CD8-positive, alpha-beta memory T cell (primary cell): ENCODE measurements at regions of chr4 and their contacts with region 1.

Region 1: GRCh38 chr4:87235020-87235671 is 14.7 kb upstream of the KLHL8 start:
- DNase-seq: no peak
- H3K4me3 ChIP-seq: peak overlapping the region; percentile 51
- H3K4me3 Mint-ChIP-seq: peak overlapping the region; percentile 61 to 88 (median 78)
- H3K27ac ChIP-seq: no peak overlapping the region
- H3K27ac Mint-ChIP-seq: peak overlapping the region in 1 of 8 donors; percentile 49
- H3K4me1 ChIP-seq: peaks cover 5% of the 10 kb centered on the region
- H3K4me1 Mint-ChIP-seq: peaks cover 0 to 2% (median 0%) of the 10 kb centered on the region in 3 donors
- H3K27me3 ChIP-seq: no peaks in the 10 kb centered on the region
- H3K27me3 Mint-ChIP-seq: peaks cover 3 to 10% of the 10 kb centered on the region in 2 donors

Region 2: DNA sequence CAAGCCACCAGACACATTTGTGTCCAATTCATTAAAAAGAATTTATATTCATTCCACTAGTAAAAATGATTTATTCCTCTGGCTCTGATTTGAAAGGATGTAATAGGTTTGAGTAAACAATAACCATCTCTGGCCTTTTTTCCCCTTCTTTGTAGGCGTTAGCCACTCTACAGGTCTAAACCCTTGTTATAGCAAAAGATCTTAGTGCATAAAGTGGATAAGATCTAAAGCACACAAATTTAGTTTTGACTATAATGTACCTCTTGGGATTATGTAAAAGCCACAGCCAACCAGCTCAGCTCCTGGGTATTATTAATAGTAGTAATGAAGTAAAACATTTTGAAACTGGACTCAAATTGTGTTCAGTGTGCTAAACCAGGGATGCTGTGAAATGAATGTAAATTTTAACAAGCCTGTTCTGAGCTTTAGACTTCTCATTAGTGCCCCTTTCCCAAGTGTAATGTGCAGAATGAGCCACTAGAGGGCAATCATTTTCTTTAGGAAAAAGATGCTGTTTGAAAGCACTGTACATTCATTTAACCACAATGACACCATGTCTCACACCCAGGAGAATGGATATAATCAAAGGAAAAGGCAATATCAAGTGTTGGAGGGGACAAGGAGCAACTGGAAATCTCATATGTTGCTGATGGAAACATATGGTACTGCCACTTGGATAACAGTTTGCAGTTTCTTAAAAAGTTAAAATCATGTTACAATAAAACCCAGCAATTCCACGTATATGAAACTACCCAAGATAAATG is 84.5 kb before region 1 on chr4:
- CTCF ChIA-PET with region 1: interaction called, 43 read pairs
- POLR2A ChIA-PET with region 1: no interaction called
- DNase-seq: peak; percentile 14 to 56 (median 42)
- H3K4me3 ChIP-seq: no peak overlapping the region
- H3K4me3 Mint-ChIP-seq: no peak overlapping the region
- H3K27ac ChIP-seq: no peak overlapping the region
- H3K27ac Mint-ChIP-seq: peak overlapping the region in 1 of 8 donors; percentile 1
- H3K4me1 ChIP-seq: no peaks in the 10 kb centered on the region
- H3K4me1 Mint-ChIP-seq: no peaks in the 10 kb centered on the region
- H3K27me3 ChIP-seq: no peaks in the 10 kb centered on the region
- H3K27me3 Mint-ChIP-seq: no peaks in the 10 kb centered on the region

Region 3: DNA sequence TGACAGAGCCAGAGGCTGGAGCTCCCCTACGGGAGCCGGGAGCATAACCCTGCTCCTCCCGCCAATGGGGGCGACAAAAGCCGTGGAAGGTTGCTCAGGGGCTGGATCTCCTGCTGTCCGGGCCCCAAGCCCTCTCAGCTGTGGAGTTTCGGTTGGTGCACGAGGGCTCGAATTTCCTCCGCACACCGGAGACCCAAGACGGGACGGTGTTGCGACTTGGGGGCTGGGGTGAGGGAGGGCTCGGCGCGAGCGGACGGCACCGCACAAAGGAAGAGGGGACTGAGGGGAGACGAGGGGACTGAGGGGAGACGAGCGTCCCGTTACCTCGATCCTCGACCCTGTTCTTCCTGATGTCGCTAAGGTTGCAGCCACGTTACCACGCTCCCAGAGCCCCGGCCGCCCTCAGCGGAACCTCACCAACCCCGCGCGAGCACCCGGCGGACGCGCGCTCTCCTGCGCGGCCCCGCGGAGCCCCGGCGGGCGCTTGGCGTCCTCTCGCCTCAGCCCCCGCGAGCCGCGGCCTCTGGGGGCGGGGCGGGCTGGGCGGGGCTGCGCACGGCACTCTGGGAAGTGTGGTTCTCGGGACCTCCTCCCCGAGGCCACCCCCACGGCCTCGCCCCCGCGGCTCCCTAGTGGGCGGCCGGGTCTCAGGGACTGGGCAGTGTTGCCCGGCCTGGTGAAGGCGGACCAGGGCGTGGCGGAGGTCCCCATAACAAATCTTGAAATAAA is 14.9 kb before region 1 on chr4 and contains the start of gene KLHL8:
- CTCF ChIA-PET with region 1: interaction called, 19 read pairs
- POLR2A ChIA-PET with region 1: interaction called, 3 read pairs
- DNase-seq: peak; percentile 78 to 92 (median 89)
- H3K4me3 ChIP-seq: peak within 1 kb of the TSS; percentile 99
- H3K4me3 Mint-ChIP-seq: peak within 1 kb of the TSS; percentile 93 to 96 (median 94)
- H3K27ac ChIP-seq: peak within 1 kb of the TSS; percentile 90
- H3K27ac Mint-ChIP-seq: peak within 1 kb of the TSS; percentile 89 to 97 (median 94)
- H3K4me1 ChIP-seq: peaks cover 13% of the 10 kb centered on the region
- H3K4me1 Mint-ChIP-seq: peaks cover 14 to 23% (median 14%) of the 10 kb centered on the region in 3 donors
- H3K27me3 ChIP-seq: no peaks in the 10 kb centered on the region
- H3K27me3 Mint-ChIP-seq: peaks cover 0 to 2% of the 10 kb centered on the region in 2 donors
- total RNA-seq, gene KLHL8: 15.6 to 15.8 TPM

Region 4: DNA sequence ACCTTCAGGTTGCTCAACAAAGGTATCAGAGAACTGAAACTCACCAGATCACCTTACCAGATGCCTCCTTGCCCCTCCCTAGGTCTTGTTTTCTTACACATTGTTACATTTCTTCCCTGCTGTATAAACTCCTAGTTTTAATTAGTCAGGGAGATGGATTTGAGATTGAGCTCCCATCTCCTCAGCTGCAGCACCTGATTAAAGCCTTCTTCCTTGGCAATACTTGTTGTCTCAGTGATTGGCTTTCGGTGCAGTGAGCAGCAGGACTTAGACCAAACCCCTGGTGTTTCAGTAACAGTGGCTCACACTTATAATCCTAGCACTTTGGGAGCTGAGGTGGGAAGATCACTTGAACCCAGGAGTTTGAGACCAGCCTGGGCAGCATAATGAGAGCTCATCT is 27.7 kb after region 1 on chr4:
- CTCF ChIA-PET with region 1: no interaction called
- POLR2A ChIA-PET with region 1: no interaction called
- DNase-seq: no peak
- H3K4me3 ChIP-seq: no peak overlapping the region
- H3K4me3 Mint-ChIP-seq: no peak overlapping the region
- H3K27ac ChIP-seq: no peak overlapping the region
- H3K27ac Mint-ChIP-seq: peak overlapping the region in 1 of 8 donors; percentile 61
- H3K4me1 ChIP-seq: no peaks in the 10 kb centered on the region
- H3K4me1 Mint-ChIP-seq: peaks cover 0 to 3% (median 0%) of the 10 kb centered on the region in 3 donors
- H3K27me3 ChIP-seq: no peaks in the 10 kb centered on the region
- H3K27me3 Mint-ChIP-seq: peaks cover 11 to 24% of the 10 kb centered on the region in 2 donors

Region 5: GRCh38 chr4:87299898-87300297 is 64.8 kb after region 1 on chr4:
- CTCF ChIA-PET with region 1: no interaction called
- POLR2A ChIA-PET with region 1: no interaction called
- DNase-seq: no peak
- H3K4me3 ChIP-seq: no peak overlapping the region
- H3K4me3 Mint-ChIP-seq: no peak overlapping the region
- H3K27ac ChIP-seq: no peak overlapping the region
- H3K27ac Mint-ChIP-seq: no peak overlapping the region
- H3K4me1 ChIP-seq: no peaks in the 10 kb centered on the region
- H3K4me1 Mint-ChIP-seq: no peaks in the 10 kb centered on the region
- H3K27me3 ChIP-seq: no peaks in the 10 kb centered on the region
- H3K27me3 Mint-ChIP-seq: peaks cover 5 to 15% of the 10 kb centered on the region in 2 donors